Activated CD4-positive, alpha-beta memory T cell treated with anti-CD3 and anti-CD28 coated beads for 36 hours (primary cell): ENCODE measurements at regions of chr11 and their contacts with region 1.

Region 1: GRCh38 chr11:19742588-19743292 is 30.1 kb downstream of the NAV2 start:
- DNase-seq: peak; percentile 83
- H3K4me3 Mint-ChIP-seq: no peak overlapping the region
- H3K27ac Mint-ChIP-seq: no peak overlapping the region
- H3K4me1 Mint-ChIP-seq: no peaks in the 10 kb centered on the region
- H3K27me3 Mint-ChIP-seq: no peaks in the 10 kb centered on the region

Region 2: GRCh38 chr11:18657673-18658072 is 1085.1 kb before region 1 on chr11:
- CTCF ChIA-PET with region 1: no interaction called
- POLR2A ChIA-PET with region 1: no interaction called
- intact Hi-C with region 1: no loop called
- DNase-seq: no peak
- H3K4me3 Mint-ChIP-seq: no peak overlapping the region
- H3K27ac Mint-ChIP-seq: no peak overlapping the region
- H3K4me1 Mint-ChIP-seq: no peaks in the 10 kb centered on the region
- H3K27me3 Mint-ChIP-seq: peaks cover 1% of the 10 kb centered on the region

Region 3: GRCh38 chr11:19553683-19554333 is 188.9 kb before region 1 on chr11:
- CTCF ChIA-PET with region 1: interaction called, 52 read pairs
- POLR2A ChIA-PET with region 1: no interaction called
- intact Hi-C with region 1: no loop called
- DNase-seq: peak; percentile 82
- H3K4me3 Mint-ChIP-seq: no peak overlapping the region
- H3K27ac Mint-ChIP-seq: no peak overlapping the region
- H3K4me1 Mint-ChIP-seq: no peaks in the 10 kb centered on the region
- H3K27me3 Mint-ChIP-seq: peaks cover 6% of the 10 kb centered on the region

Region 4: DNA sequence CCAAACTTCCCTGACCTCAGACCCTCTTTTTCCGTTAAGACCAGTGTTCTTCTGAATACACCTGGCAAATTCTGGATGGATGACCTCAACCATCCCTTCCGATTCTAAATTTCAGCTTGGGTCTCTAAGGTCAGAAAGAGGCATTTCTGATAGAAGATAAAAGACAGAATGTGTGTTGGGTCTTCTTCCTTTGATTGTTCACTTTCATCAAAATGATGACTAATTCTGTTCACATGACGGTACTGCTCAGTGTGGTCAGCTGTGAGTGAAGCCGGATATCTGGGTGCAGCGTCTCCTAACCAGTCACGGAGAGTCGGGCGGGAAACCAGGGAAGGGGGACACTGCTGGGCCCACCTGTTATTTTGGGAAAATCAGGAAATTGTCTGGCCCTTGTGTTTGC is 181.7 kb before region 1 on chr11:
- CTCF ChIA-PET with region 1: interaction called, 145 read pairs
- POLR2A ChIA-PET with region 1: no interaction called
- intact Hi-C with region 1: loop called (anchors 1 kb)
- DNase-seq: no peak
- H3K4me3 Mint-ChIP-seq: no peak overlapping the region
- H3K27ac Mint-ChIP-seq: no peak overlapping the region
- H3K4me1 Mint-ChIP-seq: no peaks in the 10 kb centered on the region
- H3K27me3 Mint-ChIP-seq: peaks cover 7% of the 10 kb centered on the region

Region 5: GRCh38 chr11:19566583-19567379 is 176.0 kb before region 1 on chr11:
- CTCF ChIA-PET with region 1: interaction called, 145 read pairs
- POLR2A ChIA-PET with region 1: no interaction called
- intact Hi-C with region 1: loop called (anchors 1 kb)
- DNase-seq: no peak
- H3K4me3 Mint-ChIP-seq: no peak overlapping the region
- H3K27ac Mint-ChIP-seq: no peak overlapping the region
- H3K4me1 Mint-ChIP-seq: no peaks in the 10 kb centered on the region
- H3K27me3 Mint-ChIP-seq: peaks cover 8% of the 10 kb centered on the region

Region 6: DNA sequence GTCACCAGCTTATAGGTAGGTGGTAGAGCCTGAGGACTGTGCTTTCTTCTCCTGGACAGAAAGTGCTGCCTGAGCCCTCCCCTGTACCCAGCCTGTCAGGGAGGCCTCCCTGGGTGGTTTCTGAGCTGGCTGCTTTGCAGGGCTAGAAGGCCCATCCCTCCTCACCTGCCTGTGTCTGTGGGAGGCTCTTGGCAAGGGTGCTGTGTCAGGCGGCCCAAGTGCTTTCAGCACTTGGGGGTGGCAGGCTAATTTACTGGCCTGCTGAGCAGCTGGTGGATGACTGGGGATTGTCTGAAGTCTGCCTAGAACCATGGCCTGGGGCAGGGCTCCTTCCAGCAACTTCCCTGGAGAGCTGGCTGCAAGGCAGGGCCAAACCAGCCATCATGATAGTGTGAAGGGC is 169.1 kb before region 1 on chr11:
- CTCF ChIA-PET with region 1: interaction called, 10 read pairs
- POLR2A ChIA-PET with region 1: no interaction called
- intact Hi-C with region 1: no loop called
- DNase-seq: no peak
- H3K4me3 Mint-ChIP-seq: no peak overlapping the region
- H3K27ac Mint-ChIP-seq: no peak overlapping the region
- H3K4me1 Mint-ChIP-seq: no peaks in the 10 kb centered on the region
- H3K27me3 Mint-ChIP-seq: peaks cover 8% of the 10 kb centered on the region

Region 7: GRCh38 chr11:19723572-19724342 is 19.0 kb before region 1 on chr11:
- CTCF ChIA-PET with region 1: interaction called, 15 read pairs
- POLR2A ChIA-PET with region 1: no interaction called
- intact Hi-C with region 1: no loop called
- DNase-seq: peak; percentile 71
- H3K4me3 Mint-ChIP-seq: peak overlapping the region; percentile 18
- H3K27ac Mint-ChIP-seq: peak overlapping the region; percentile 86
- H3K4me1 Mint-ChIP-seq: peaks cover 29% of the 10 kb centered on the region
- H3K27me3 Mint-ChIP-seq: no peaks in the 10 kb centered on the region

Region 8: DNA sequence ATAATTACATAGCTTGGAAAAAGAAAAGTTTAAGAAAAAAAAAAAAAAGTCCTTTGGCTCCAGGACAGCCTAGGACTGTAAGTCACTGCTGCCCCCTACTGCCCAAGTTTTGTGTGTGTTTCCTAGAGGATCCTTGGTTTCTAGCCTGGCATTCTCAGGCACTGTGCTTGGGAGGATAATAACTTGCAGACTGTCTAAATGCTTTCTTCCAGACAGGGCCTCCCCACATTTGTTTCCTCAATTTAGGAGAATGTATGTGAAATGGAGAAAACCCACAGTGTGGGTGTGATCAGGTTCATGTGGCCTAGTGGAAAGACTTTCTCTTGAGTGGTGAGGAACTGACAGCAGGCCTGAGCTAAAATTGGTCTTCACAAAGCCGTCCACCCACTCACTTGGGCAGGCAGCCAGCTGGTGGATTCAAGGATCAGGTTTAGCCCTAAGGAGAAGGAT is 160.9 kb after region 1 on chr11:
- CTCF ChIA-PET with region 1: interaction called, 3 read pairs
- POLR2A ChIA-PET with region 1: no interaction called
- intact Hi-C with region 1: loop called (anchors 10 kb)
- DNase-seq: peak; percentile 69
- H3K4me3 Mint-ChIP-seq: no peak overlapping the region
- H3K27ac Mint-ChIP-seq: no peak overlapping the region
- H3K4me1 Mint-ChIP-seq: no peaks in the 10 kb centered on the region
- H3K27me3 Mint-ChIP-seq: no peaks in the 10 kb centered on the region